ENCODE measurements at regions of chr19 and their contacts with region 1.

Region 1: GRCh38 chr19:10580979-10581631 is 6.0 kb downstream of the AP1M2 start:
- DNase-seq: peak; percentile 95
- ATAC-seq: peak; percentile 98
- H3K4me3 Mint-ChIP-seq: no peak overlapping the region
- H3K27ac Mint-ChIP-seq: no peak overlapping the region
- H3K4me1 Mint-ChIP-seq: peaks cover 17% of the 10 kb centered on the region
- H3K27me3 Mint-ChIP-seq: no peaks in the 10 kb centered on the region

Region 2: DNA sequence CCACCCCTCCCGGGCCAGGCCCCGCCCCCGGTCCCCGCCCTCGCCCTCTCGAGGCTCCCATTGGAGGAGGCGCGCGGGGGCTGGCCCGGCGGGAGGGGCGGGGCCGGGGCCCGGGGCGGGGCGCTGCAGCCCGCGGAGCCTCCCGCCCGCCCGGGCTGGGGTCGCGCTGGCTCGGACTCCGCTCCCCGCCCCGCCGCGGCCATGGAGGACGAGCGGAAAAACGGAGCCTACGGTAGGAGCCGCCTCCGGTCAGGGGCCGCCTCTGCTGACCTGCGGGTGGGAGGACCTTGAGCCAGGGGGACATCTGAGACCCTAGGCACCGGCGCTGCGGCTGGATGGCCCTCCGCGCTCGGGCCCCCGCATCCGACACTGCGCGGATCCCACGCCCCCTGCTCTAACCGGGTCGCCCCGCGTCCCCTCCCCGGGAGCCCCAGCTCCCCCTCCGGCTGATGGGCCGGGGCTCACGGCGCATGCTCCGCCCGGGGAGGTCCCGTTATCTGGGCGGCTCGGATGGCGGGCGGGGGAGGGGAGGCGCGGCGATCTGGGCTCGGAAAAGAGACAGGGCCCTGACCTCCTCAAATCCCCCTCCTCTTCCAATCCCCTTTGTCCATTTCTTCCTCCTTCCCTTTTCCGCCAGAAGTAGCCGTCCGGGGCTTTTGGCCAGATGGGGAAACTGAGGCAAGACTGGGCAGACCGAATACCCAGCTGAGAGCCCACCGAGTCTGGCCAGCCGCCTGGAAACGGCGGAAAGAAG is 21.4 kb after region 1 on chr19:
- CTCF ChIA-PET with region 1: interaction called, 36 read pairs
- POLR2A ChIA-PET with region 1: interaction called, 4 read pairs
- intact Hi-C with region 1: loop called in 1 of 2 experiments (anchors 1 kb)
- DNase-seq: peak; percentile 95
- ATAC-seq: peak; percentile 84
- H3K4me3 Mint-ChIP-seq: peak overlapping the region; percentile 95
- H3K27ac Mint-ChIP-seq: peak overlapping the region; percentile 99
- H3K4me1 Mint-ChIP-seq: peaks cover 24% of the 10 kb centered on the region
- H3K27me3 Mint-ChIP-seq: no peaks in the 10 kb centered on the region

Region 3: GRCh38 chr19:10620786-10621185 is 39.7 kb after region 1 on chr19:
- CTCF ChIA-PET with region 1: interaction called, 12 read pairs
- POLR2A ChIA-PET with region 1: no interaction called
- intact Hi-C with region 1: no loop called
- DNase-seq: no peak
- ATAC-seq: no peak
- H3K4me3 Mint-ChIP-seq: no peak overlapping the region
- H3K27ac Mint-ChIP-seq: peak overlapping the region; percentile 55
- H3K4me1 Mint-ChIP-seq: peaks cover 27% of the 10 kb centered on the region
- H3K27me3 Mint-ChIP-seq: no peaks in the 10 kb centered on the region

Region 4: GRCh38 chr19:10662384-10663251 is 81.5 kb after region 1 on chr19:
- CTCF ChIA-PET with region 1: interaction called, 10 read pairs
- POLR2A ChIA-PET with region 1: interaction called, 3 read pairs
- intact Hi-C with region 1: no loop called
- DNase-seq: peak; percentile 55
- ATAC-seq: peak; percentile 70
- H3K4me3 Mint-ChIP-seq: no peak overlapping the region
- H3K27ac Mint-ChIP-seq: peak overlapping the region; percentile 80
- H3K4me1 Mint-ChIP-seq: peaks cover 54% of the 10 kb centered on the region
- H3K27me3 Mint-ChIP-seq: no peaks in the 10 kb centered on the region